Gastrocnemius medialis (tissue), 4 donors: ENCODE measurements at regions of chr11 and their contacts with region 1.

Region 1: GRCh38 chr11:62787005-62787759 is at the start of gene TMEM179B:
- DNase-seq: peak; percentile 98 to 99
- ATAC-seq: peak; percentile 90 to 94
- H3K4me3 ChIP-seq: peak within 1 kb of the TSS; percentile 84 to 97 (median 93)
- H3K27ac ChIP-seq: peak within 1 kb of the TSS; percentile 85 to 99 (median 93)
- H3K4me1 ChIP-seq: peaks cover 35 to 39% of the 10 kb centered on the region in 2 donors
- H3K27me3 ChIP-seq: no peaks in the 10 kb centered on the region
- CTCF ChIP-seq: peak in 3 of 5 experiments; percentile 2 to 54 (median 36)
- POLR2A ChIP-seq: peak; percentile 96 to 97
- total RNA-seq, gene TMEM179B: 26.3 to 52.5 (median 44.3) TPM

Region 2: DNA sequence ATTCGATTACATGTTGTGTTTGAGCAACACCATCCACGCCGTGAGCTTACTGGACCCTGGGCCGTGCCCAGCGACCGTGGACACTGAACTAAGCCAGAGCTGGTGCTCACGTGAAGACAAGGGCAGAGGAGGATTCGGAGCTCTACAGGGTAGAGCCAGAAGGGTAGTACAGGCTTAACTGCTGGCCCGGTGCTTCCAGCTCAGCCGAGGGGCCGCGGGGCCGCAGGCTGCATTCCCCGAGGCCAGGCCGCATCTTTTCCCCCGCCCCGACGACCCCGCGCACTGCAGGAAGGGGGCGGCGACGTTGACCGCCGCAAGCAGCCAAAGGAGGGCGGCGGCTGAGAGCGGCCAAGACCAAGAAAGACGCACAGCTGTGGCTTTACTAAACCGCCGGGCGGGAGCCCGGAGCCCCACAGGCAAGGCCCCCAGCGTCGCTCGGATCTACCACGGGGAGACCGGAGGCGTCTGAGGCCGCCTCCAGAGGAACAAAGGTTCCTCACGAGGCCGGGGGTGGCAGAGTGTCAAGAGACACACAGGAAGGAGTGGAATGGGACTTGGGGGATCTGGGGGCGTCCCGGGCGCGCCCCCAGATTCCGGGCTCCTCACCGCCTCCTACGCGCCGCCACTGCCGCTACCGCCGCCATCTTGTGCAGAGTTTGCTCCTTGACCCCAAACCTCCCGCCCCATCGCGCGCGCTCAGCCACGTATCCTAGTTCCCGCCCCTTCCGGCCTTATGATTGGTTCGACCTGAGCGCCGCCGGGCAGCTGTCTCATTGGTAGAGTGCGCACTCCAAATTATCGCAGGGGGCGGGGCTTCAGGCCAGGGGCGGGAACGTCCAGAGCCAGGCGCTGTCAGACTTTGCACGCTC is 141.0 kb before region 1 on chr11 and contains the start of gene GANAB:
- in situ Hi-C with region 1: no loop called
- intact Hi-C with region 1: loop called (anchors 10 kb)
- DNase-seq: peak; percentile 99
- ATAC-seq: peak; percentile 98
- H3K4me3 ChIP-seq: peak within 1 kb of the TSS; percentile 91 to 100 (median 96)
- H3K27ac ChIP-seq: peak within 1 kb of the TSS; percentile 96 to 99 (median 96)
- H3K4me1 ChIP-seq: peaks cover 29 to 30% of the 10 kb centered on the region in 2 donors
- H3K27me3 ChIP-seq: no peaks in the 10 kb centered on the region
- CTCF ChIP-seq: peak in 1 of 5 experiments; percentile 20
- POLR2A ChIP-seq: peak; percentile 81 to 92
- total RNA-seq, gene GANAB: 41.3 to 65.1 (median 59.5) TPM

Region 3: GRCh38 chr11:62726915-62727763 is 60.0 kb before region 1 on chr11 and contains the start of gene HNRNPUL2:
- in situ Hi-C with region 1: no loop called
- intact Hi-C with region 1: loop called (anchors 1 kb)
- DNase-seq: peak; percentile 97 to 99
- ATAC-seq: peak; percentile 79 to 81
- H3K4me3 ChIP-seq: peak within 1 kb of the TSS; percentile 63 to 95 (median 80)
- H3K27ac ChIP-seq: peak within 1 kb of the TSS; percentile 87 to 94 (median 90)
- H3K4me1 ChIP-seq: peaks cover 44 to 47% of the 10 kb centered on the region in 2 donors
- H3K27me3 ChIP-seq: no peaks in the 10 kb centered on the region
- CTCF ChIP-seq: no peak
- POLR2A ChIP-seq: peak; percentile 93 to 97
- total RNA-seq, gene HNRNPUL2: 4.8 to 14.9 (median 11.8) TPM

Region 4: DNA sequence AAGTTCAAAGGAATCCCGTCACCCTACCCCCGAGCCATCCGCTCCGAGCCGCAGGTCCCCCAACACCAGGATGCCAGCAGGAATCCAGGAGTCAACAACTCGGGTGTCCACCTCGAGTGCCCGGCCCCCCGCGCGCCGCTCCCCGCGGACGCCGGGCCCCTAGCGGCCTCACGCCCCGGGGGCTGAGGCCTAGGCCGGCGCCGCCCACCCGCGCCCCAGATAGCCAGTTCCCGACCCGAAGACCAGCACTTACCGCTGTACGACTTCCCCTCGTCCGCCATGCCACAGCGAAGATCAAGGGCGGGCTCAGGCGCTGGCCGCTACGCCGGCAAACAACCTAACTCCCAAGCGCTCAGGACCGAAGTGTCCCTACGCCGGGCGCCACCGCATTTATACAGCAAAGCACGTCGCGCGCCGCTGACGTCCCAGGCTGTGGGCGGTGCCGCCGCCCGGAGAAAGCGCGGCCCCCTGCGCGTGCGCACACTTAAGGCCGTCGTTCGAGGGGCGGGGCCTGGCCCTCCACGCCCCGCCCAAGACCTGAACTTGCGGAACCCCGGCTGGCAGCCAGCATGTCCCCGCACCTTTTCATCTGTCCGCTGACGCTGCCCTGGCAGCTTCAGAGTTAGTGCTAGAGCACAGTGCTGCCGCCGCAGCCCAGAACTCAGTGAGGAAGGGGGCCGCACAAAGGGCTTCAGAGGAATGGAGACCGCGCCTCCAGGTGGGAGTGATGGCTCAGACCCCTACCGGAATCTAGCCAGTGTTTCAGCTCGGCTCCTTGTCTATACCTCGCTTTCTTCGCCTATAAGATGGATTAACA is 18.1 kb after region 1 on chr11 and contains the start of gene NXF1:
- in situ Hi-C with region 1: no loop called
- intact Hi-C with region 1: loop called (anchors 1 kb)
- DNase-seq: peak; percentile 91 to 95
- ATAC-seq: peak; percentile 77 to 79
- H3K4me3 ChIP-seq: peak within 1 kb of the TSS; percentile 69 to 95 (median 78)
- H3K27ac ChIP-seq: peak within 1 kb of the TSS; percentile 91 to 98 (median 94)
- H3K4me1 ChIP-seq: peaks cover 24 to 28% of the 10 kb centered on the region in 2 donors
- H3K27me3 ChIP-seq: no peaks in the 10 kb centered on the region
- CTCF ChIP-seq: peak in 4 of 5 experiments; percentile 23 to 41 (median 38)
- POLR2A ChIP-seq: peak; percentile 100
- total RNA-seq, gene NXF1: 27.2 to 47.1 (median 46.1) TPM

Region 5: GRCh38 chr11:62831520-62832335 is 44.5 kb after region 1 on chr11 and contains the start of gene STX5:
- in situ Hi-C with region 1: no loop called
- intact Hi-C with region 1: loop called (anchors 1 kb)
- DNase-seq: peak; percentile 99
- ATAC-seq: peak; percentile 95 to 96
- H3K4me3 ChIP-seq: peak within 1 kb of the TSS; percentile 83 to 100 (median 94)
- H3K27ac ChIP-seq: peak within 1 kb of the TSS; percentile 92 to 100 (median 96)
- H3K4me1 ChIP-seq: peaks cover 27 to 32% of the 10 kb centered on the region in 2 donors
- H3K27me3 ChIP-seq: no peaks in the 10 kb centered on the region
- CTCF ChIP-seq: no peak
- POLR2A ChIP-seq: peak; percentile 89 to 90
- total RNA-seq, gene STX5: 16.2 to 26.0 (median 24.9) TPM

Region 6: DNA sequence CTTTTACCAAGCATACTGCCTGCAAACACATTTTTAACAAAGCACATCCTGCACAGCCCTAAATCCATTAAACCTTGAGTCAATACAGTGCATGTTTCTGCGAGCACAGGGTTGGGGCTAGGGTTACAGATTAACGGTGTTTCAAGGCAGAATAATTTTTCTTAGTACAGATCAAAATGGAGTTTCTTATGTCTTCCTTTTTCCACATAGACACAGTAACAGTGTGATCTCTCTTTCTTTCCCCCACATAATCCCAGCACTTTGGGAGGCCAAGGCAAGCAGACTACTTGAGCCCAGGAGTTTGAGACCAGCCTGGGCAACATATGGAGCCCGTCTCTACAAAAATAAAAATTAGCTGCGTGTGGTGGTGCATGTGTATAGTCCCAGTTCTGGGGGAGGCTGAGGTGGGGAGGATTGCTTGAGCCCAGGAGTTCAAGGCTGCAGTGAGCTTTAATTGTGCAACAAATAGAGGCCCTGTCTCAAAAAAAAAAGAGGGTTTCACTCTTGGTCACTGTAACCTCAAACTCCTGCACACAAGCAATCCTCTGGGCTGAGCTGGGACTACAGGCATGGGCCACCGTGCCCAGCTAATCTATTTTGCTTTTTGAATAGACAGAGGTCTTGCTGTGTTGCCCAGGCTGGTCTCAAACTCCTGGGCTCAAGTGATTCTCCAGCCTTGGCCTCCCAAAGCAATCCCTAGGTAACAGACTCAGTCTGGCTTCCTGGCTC is 73.8 kb after region 1 on chr11:
- in situ Hi-C with region 1: loop called (anchors 5 to 10 kb)
- intact Hi-C with region 1: loop called (anchors 1 kb)
- DNase-seq: no peak
- ATAC-seq: no peak
- H3K4me3 ChIP-seq: no peak overlapping the region
- H3K27ac ChIP-seq: no peak overlapping the region
- H3K4me1 ChIP-seq: peaks cover 0 to 7% of the 10 kb centered on the region in 2 donors
- H3K27me3 ChIP-seq: no peaks in the 10 kb centered on the region
- CTCF ChIP-seq: no peak
- POLR2A ChIP-seq: no peak

Region 7: GRCh38 chr11:62974848-62975522 is 187.8 kb after region 1 on chr11:
- in situ Hi-C with region 1: no loop called
- intact Hi-C with region 1: no loop called
- DNase-seq: no peak
- ATAC-seq: no peak
- H3K4me3 ChIP-seq: no peak overlapping the region
- H3K27ac ChIP-seq: no peak overlapping the region
- H3K4me1 ChIP-seq: peaks cover 3 to 4% of the 10 kb centered on the region in 2 donors
- H3K27me3 ChIP-seq: no peaks in the 10 kb centered on the region
- CTCF ChIP-seq: peak in 2 of 5 experiments; percentile 22 to 33
- POLR2A ChIP-seq: no peak